Uterus (tissue), 4 donors: ENCODE measurements at regions of chr3 and their contacts with region 1.

Region 1: DNA sequence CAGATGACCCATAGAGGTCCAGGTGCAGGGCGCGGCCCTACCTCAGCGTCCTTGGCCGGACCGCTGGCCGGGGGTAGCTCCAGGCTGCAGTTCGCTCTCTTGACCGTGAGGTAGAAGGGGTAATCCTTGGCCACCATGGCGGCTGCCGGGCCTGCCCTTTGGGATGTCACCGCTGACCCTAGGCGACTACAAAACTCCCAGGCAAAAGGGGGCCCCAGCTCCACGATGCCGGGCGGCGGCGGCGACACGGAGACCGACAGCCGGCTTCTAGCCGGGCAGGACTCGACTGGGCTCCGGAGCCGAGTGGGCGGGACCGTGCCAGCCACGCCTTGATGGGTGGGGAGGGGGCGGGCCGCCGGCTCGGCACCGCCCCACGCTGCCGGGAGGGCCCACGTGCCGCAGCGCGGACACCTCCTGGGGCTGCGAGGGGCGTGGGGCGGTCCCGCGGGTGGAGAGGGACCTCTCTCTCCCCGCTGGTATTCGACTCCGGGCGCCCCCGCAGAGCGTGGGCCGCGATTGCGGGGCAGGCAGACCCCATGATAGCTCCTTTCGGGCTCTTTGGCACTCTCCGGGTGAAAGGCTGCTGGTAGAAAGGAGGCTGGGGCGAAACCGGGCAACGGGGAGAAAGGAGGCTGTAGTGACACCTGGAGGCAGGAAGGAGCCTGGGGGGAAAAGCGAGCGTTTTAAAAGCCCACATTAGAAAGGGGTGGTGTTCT is at the start of gene ARHGEF3:
- DNase-seq: peak; percentile 83 to 87
- H3K4me3 ChIP-seq: peak within 1 kb of the TSS; percentile 69 to 81
- H3K27ac ChIP-seq: peak within 1 kb of the TSS; percentile 78 to 82
- H3K4me1 ChIP-seq: no peaks in the 10 kb centered on the region
- H3K27me3 ChIP-seq: no peaks in the 10 kb centered on the region
- CTCF ChIP-seq: peak; percentile 39 to 55 (median 48)
- POLR2A ChIP-seq: peak; percentile 85 to 90
- total RNA-seq, gene ARHGEF3: 15.9 to 79.4 (median 44.8) TPM

Region 2: DNA sequence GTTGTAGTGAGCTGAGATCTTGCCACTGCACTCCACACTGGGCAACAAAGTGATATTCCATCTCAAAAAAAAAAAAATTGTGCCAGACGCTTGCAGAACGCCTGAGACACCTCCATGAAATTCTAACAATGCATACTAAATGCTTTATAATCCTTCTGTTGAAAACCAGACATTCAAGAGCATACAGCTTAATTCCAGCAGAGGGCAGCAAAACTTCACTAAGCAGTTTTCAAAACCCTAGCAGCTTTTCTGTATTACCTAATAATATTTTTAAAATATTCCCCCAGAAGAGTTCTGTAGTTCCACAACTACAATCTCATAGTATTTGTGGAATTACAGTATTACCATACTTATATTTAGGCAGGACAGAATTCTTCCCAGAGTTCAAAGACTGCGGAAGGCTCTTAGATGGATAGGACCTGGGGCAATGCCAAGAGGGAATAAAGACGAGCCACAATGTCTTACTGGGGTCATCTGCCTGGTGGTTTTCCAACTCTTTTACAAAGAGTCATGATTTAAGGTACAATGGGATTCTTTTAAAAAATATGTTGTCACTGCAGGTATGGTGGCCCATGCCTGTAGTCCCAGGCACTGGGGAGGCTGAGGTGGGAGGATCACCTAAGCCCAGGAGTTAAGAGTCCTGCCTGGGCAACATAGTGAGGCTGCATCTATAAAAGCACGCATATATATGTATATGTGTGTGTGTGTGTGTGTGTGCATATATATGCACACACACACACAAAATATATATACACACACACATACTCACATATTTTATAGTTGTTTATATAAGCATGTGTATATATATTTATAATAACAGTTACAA is 99.1 kb before region 1 on chr3:
- intact Hi-C with region 1: loop called (anchors 5 kb)
- DNase-seq: peak in 1 of 2 donors; percentile 68
- H3K4me3 ChIP-seq: no peak overlapping the region
- H3K27ac ChIP-seq: peak overlapping the region in 1 of 2 donors; percentile 2
- H3K4me1 ChIP-seq: no peaks in the 10 kb centered on the region
- H3K27me3 ChIP-seq: no peaks in the 10 kb centered on the region
- CTCF ChIP-seq: peak; percentile 86 to 96 (median 89)
- POLR2A ChIP-seq: no peak

Region 3: GRCh38 chr3:56915966-56916586 is 114.3 kb after region 1 on chr3:
- intact Hi-C with region 1: no loop called
- DNase-seq: peak in 1 of 2 donors; percentile 51
- H3K4me3 ChIP-seq: no peak overlapping the region
- H3K27ac ChIP-seq: peak overlapping the region; percentile 43 to 52
- H3K4me1 ChIP-seq: peaks cover under 1% of the 10 kb centered on the region in 2 donors
- H3K27me3 ChIP-seq: no peaks in the 10 kb centered on the region
- CTCF ChIP-seq: no peak
- POLR2A ChIP-seq: no peak

Region 4: DNA sequence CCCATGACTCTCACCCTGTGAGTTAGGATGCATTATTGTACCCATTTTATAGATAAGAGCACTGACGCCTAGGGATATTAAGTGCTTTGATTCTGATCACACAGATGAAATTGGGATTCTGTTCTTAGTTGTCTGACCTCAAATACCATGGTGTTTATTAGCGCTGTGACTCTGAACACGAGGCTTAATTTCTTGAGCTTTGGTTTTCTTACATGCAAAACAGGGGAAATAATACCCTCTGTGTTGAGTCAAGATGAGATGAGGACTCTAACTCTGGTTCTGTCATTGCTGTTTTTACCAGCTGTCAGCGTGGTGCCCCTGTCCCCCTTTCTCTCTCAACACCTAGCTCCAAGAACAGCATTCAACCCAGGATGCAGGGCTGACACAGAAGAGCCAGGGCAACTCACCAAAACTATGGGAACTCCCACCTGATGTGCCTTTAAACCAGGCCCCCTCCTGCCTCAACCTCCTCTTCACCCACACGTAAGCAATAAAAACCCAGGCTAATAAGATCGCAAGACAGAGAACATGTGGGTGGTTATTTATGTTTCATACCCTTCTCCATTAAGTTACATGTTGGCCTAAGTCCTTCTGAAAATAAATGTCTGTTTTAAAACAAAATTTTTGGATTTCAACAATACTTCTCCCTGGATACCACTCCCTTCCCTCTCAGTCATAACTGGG is 158.6 kb after region 1 on chr3:
- intact Hi-C with region 1: no loop called
- DNase-seq: no peak
- H3K4me3 ChIP-seq: no peak overlapping the region
- H3K27ac ChIP-seq: peak overlapping the region; percentile 18 to 35
- H3K4me1 ChIP-seq: no peaks in the 10 kb centered on the region
- H3K27me3 ChIP-seq: no peaks in the 10 kb centered on the region
- CTCF ChIP-seq: no peak
- POLR2A ChIP-seq: no peak

Region 5: DNA sequence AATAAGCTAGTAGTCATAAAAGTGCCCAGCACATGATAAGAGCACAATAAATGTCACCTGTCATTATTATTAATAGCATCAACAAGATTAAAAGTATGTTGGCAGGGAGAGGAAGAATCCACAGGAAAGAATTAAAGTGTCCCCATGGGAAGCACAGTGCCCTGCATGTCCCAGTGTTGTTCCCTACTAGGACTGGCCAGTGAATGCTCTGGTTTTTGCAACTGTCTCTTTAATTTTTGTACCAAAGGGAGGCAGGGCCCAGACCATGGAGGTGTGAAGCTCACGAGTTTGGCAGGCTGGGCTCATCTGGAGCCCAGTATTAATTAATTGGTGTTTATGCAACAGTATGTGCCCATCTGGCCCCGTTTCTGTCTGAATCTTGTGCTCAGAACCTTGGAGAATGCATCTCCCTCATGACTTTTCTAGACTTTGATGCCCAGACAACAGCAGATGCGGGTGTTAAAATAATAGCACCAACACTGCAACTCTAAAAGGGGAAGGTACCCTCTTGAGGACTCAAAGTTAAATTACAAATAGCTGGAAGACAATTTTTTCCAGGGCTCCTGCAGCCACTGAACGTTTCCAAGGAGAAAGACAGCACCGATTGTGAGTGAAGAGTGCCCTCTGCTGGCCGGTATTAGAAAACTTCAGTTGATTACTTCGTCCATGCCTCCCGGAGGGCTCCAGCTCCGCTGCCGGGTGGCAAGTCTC is 186.8 kb after region 1 on chr3:
- intact Hi-C with region 1: loop called (anchors 10 kb)
- DNase-seq: peak; percentile 82 to 91
- H3K4me3 ChIP-seq: no peak overlapping the region
- H3K27ac ChIP-seq: peak overlapping the region; percentile 43 to 78
- H3K4me1 ChIP-seq: peaks cover 0 to 4% of the 10 kb centered on the region in 2 donors
- H3K27me3 ChIP-seq: no peaks in the 10 kb centered on the region
- CTCF ChIP-seq: peak; percentile 77 to 96 (median 88)
- POLR2A ChIP-seq: no peak